AG04449 (cell line): ENCODE measurements at regions of chr15 and their contacts with region 1.

Region 1: DNA sequence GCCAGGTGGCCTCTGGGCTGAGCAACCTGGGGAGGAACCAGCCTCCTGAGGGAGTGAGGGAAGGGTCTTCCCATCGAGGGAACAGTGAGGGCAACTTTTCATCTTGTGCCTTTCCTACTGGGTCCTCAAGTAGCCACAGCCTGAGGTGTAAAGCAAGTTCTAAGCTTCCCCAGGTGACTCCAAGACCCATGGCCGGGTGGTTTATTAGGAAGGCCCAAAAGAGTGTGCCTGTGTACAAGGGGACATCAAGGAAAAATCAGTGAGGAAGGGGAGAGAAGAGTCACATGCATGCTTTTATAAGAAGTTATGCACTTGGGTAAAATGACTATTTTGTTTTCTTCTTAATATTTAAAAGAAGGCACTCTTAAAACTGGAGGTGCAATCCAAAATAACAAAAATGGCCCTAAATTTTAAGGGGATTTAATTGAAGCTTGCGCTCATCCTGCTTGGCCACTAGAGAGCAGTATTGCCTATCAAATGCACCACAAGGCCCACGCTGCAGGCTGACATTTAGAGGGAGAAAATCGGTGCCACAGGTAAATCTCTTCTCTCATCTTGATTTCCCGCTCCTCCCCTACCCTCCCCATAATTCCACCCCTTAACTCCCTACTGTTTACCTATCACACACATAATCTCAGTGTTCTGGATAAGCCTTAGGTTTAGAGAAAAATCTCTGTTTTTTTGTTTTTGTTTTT is 6.7 kb downstream of the NANOGP8 start:
- DNase-seq: peak; percentile 14
- H3K4me3 ChIP-seq: no peak overlapping the region
- CTCF ChIP-seq: peak; percentile 68

Region 2: GRCh38 chr15:35000511-35000910 is 77.9 kb before region 1 on chr15:
- CTCF ChIA-PET with region 1: no interaction called
- POLR2A ChIA-PET with region 1: no interaction called
- DNase-seq: no peak
- H3K4me3 ChIP-seq: no peak overlapping the region
- CTCF ChIP-seq: no peak

Region 3: GRCh38 chr15:35067496-35068347 is 10.6 kb before region 1 on chr15:
- CTCF ChIA-PET with region 1: interaction called, 36 read pairs
- POLR2A ChIA-PET with region 1: no interaction called
- DNase-seq: no peak
- H3K4me3 ChIP-seq: no peak overlapping the region
- CTCF ChIP-seq: no peak

Region 4: DNA sequence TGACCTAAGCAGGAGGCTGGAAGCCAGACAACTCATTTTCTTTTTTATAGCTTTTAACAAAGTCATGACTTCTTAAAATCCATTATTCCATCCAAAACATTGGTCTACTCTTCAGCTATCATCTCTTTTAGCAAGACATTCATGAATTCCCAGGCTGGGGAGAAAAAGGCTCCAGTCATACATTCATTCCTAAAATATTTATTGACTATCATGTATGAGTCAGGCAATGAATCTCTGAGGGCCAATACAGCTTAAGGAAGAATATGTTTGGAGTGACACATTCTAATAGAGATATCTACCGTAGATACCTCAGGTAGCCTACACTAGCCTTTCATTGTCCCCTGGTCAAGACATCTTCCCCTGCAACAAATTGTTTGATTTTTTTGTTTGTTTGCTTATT is 203.1 kb after region 1 on chr15:
- CTCF ChIA-PET with region 1: interaction called, 23 read pairs
- POLR2A ChIA-PET with region 1: no interaction called
- DNase-seq: no peak
- H3K4me3 ChIP-seq: no peak overlapping the region
- CTCF ChIP-seq: no peak

Region 5: DNA sequence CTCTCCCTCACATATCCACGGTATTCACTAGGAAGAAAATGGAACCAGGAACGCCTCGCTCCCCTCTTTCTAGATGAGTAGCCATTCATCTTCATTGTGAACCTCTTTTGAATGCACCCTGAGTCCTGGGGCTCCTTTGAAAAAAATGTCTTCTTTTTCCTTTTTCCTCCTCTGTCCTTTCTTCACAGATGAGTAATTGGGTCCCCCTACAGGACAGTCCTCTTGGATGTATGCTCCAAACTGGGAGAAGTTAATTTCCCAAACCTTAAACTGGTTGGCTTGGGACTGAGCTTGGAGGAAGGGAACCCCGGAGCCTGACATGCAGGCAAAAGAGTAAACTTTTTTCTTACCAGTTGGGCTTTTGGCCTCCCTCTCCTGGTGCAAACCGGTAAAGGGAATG is 358.8 kb after region 1 on chr15:
- CTCF ChIA-PET with region 1: interaction called, 101 read pairs
- POLR2A ChIA-PET with region 1: no interaction called
- DNase-seq: no peak
- H3K4me3 ChIP-seq: no peak overlapping the region
- CTCF ChIP-seq: no peak

Region 6: DNA sequence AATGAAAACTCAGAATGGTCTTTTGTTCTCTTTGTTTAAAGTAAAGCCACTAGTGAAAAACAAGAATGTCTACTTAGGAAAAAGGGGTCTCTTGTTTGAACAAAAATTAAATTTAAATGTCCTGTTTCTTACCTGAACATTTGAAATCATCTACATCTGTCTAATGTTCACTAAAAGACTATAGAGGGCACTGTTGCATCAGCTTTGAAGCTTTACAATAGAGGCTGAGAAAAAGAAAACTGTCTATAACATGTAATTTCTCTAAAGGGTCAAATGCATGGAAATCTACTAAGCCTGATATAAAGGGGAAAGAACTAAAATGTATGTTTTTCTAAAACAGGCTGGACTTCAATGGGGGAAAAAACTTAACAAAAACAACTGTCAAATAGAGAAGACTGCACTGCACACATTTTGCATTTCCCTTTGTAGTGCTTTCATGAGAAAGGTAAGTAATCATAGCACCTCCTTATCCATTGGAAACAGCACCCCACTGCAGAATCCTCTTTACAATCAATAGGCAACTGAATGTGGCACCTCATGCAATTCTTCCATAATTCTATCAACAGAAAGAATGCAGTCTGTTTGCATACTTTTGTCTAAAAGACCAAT is 441.3 kb after region 1 on chr15:
- CTCF ChIA-PET with region 1: interaction called, 10 read pairs
- POLR2A ChIA-PET with region 1: no interaction called
- DNase-seq: peak; percentile 4
- H3K4me3 ChIP-seq: no peak overlapping the region
- CTCF ChIP-seq: peak; percentile 41